ENCODE measurements at regions of chr11 and their contacts with region 1.

Region 1: GRCh38 chr11:44727373-44728287 is 868 bp downstream of the TSPAN18 start:
- DNase-seq: peak; percentile 35
- H3K4me3 ChIP-seq: peak overlapping the region; percentile 39 to 42 (median 40)
- H3K27ac ChIP-seq: no peak overlapping the region
- H3K4me1 ChIP-seq: peaks cover 8% of the 10 kb centered on the region
- H3K27me3 ChIP-seq: peaks cover 10% of the 10 kb centered on the region
- CTCF ChIP-seq: peak; percentile 54 to 91

Region 2: GRCh38 chr11:44565211-44565952 is 162.2 kb before region 1 on chr11 and contains the start of gene CD82:
- CTCF ChIA-PET with region 1: no interaction called
- dilution Hi-C with region 1: no loop called
- in situ Hi-C with region 1: no loop called
- intact Hi-C with region 1: loop called (anchors 10 kb)
- DNase-seq: peak; percentile 98
- H3K4me3 ChIP-seq: peak within 1 kb of the TSS; percentile 40 to 83 (median 69)
- H3K27ac ChIP-seq: peak within 1 kb of the TSS; percentile 95
- H3K4me1 ChIP-seq: peaks cover 83% of the 10 kb centered on the region
- H3K27me3 ChIP-seq: no peaks in the 10 kb centered on the region
- CTCF ChIP-seq: peak in 1 of 2 donors; percentile 35
- total RNA-seq, gene CD82: 38.8 to 309 TPM

Region 3: DNA sequence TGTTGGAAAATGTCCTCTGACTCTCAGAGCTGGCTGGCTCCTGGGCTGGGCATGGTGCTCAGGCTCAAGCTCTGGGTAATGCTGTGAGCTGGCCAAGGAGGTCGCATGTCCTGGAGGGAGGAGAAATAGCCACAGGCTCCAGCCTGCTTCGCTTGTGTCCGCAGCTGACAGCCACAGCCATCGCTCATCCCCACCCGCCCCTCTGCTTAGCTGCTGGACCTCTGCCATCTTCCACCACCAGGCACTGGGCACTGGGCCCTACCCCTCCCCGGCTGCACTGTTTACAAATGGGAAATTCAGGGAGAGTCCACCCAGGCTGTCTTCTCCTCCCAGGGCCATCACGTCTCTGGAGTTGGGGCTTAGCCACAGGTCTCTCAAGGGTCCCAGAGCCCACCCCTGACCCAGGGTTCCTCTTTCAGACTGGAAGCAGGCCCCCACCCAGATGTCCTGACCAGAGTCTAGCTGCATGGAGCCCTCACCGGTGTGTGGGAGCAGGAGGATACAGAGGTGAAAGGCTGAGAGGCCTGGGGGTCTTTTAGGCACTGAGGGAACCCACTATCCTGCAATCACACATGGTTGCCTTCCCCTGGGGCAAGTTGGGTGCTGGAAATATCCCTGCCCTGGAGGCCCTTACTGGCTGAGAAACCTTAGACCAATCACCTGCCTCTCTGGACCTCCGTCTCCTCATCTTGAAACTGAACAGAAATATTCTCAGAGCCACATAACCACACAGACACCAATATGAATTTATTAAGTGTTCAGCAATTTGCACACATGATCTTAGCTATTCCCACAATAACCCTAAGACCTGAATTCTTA is 99.5 kb before region 1 on chr11:
- CTCF ChIA-PET with region 1: no interaction called
- dilution Hi-C with region 1: no loop called
- in situ Hi-C with region 1: no loop called
- intact Hi-C with region 1: loop called (anchors 5 kb)
- DNase-seq: no peak
- H3K4me3 ChIP-seq: no peak overlapping the region
- H3K27ac ChIP-seq: no peak overlapping the region
- H3K4me1 ChIP-seq: no peaks in the 10 kb centered on the region
- H3K27me3 ChIP-seq: no peaks in the 10 kb centered on the region
- CTCF ChIP-seq: no peak

Region 4: GRCh38 chr11:44766112-44766971 is 38.7 kb after region 1 on chr11:
- CTCF ChIA-PET with region 1: no interaction called
- dilution Hi-C with region 1: loop called (anchors 5 kb)
- in situ Hi-C with region 1: no loop called
- intact Hi-C with region 1: no loop called
- DNase-seq: no peak
- H3K4me3 ChIP-seq: no peak overlapping the region
- H3K27ac ChIP-seq: no peak overlapping the region
- H3K4me1 ChIP-seq: no peaks in the 10 kb centered on the region
- H3K27me3 ChIP-seq: no peaks in the 10 kb centered on the region
- CTCF ChIP-seq: no peak

Region 5: GRCh38 chr11:44775366-44775984 is 47.8 kb after region 1 on chr11:
- CTCF ChIA-PET with region 1: no interaction called
- dilution Hi-C with region 1: no loop called
- in situ Hi-C with region 1: no loop called
- intact Hi-C with region 1: loop called (anchors 1 kb)
- DNase-seq: peak; percentile 32
- H3K4me3 ChIP-seq: no peak overlapping the region
- H3K27ac ChIP-seq: no peak overlapping the region
- H3K4me1 ChIP-seq: no peaks in the 10 kb centered on the region
- H3K27me3 ChIP-seq: peaks cover 4% of the 10 kb centered on the region
- CTCF ChIP-seq: peak; percentile 82 to 85

Region 6: DNA sequence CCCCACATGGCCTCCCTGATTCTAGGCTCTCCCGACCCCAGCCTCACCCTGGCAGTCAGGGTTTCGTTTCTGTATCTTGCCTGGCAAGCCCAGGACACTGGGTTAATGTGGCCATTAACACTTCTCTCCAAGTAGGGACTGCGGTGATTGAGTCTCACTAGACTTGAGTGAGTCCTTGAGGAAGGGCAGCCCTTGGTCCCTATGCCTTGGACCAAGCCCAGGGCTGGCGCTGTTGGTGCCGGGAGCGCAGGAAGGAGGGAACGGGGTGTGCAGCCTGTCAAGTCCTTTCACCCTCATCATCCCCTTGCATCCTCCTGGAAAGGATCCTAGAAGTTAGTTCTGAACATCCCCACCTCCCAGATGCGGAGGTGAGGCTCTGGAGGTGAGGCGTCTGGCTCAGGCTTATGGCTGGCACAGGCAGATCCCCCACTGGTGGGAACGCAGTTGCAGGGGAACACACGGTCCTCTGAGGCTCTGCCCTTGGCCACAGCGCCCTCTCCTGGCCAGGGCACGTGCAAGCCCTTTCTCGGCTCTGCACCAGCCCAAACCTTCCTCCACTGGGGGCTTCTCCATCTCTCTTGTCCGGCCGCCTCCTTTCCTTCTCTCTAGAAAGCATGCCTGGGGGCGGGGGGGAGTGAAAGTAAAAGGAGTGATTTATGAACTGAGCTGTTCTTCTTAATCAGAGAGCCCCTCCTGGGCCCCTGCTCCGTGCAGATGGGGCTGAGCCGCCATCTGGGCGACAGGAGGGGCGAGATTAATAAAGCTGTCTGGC is 166.4 kb after region 1 on chr11:
- CTCF ChIA-PET with region 1: no interaction called
- dilution Hi-C with region 1: no loop called
- in situ Hi-C with region 1: loop called (anchors 5 kb)
- intact Hi-C with region 1: loop called (anchors 1 kb)
- DNase-seq: peak; percentile 16
- H3K4me3 ChIP-seq: no peak overlapping the region
- H3K27ac ChIP-seq: no peak overlapping the region
- H3K4me1 ChIP-seq: no peaks in the 10 kb centered on the region
- H3K27me3 ChIP-seq: peaks cover 2% of the 10 kb centered on the region
- CTCF ChIP-seq: peak; percentile 75 to 92

Region 7: GRCh38 chr11:44911029-44911814 is 183.6 kb after region 1 on chr11:
- CTCF ChIA-PET with region 1: interaction called, 5 read pairs
- dilution Hi-C with region 1: no loop called
- in situ Hi-C with region 1: no loop called
- intact Hi-C with region 1: loop called (anchors 1 kb)
- DNase-seq: peak; percentile 51
- H3K4me3 ChIP-seq: no peak overlapping the region
- H3K27ac ChIP-seq: no peak overlapping the region
- H3K4me1 ChIP-seq: no peaks in the 10 kb centered on the region
- H3K27me3 ChIP-seq: no peaks in the 10 kb centered on the region
- CTCF ChIP-seq: peak; percentile 75 to 78